ENCODE measurements at regions of chr12 and their contacts with region 1.

Region 1: DNA sequence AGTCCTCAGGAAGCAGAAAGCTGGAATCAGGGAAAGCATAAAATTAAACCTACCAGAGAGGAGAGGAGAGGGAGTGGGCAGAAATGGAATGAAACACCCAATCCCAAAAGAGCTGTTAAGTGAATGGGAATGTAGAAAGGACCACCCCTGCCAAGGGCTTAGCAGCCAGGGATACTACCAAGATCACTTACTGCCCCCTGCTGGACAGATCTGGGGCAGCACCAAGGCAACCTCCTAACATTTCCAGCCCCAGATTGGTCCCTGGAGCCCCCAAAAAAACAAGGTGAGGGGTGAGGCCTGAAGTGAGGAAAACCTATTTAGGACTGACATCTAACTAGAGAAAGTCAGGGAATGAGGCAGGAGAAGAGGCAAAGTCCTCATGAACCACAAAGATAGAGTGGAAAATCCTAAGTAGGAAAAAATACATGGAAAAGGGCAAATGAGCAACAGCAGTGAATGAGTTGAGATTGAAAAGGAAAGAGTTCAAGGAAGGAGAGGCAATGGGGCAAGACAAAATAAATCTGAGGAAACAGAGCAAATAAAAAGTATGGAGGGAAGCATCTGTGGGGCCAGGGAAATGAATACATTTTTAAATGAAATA is 11.2 kb upstream of the FKBP11 start:
- DNase-seq: peak; percentile 72 to 95
- ATAC-seq: peak; percentile 87 to 91
- H3K4me3 ChIP-seq: no peak overlapping the region
- H3K27ac ChIP-seq: no peak overlapping the region
- H3K4me1 ChIP-seq: no peaks in the 10 kb centered on the region
- CTCF ChIP-seq: peak; percentile 88
- EP300 ChIP-seq: no peak
- POLR2A ChIP-seq: no peak
- RAD21 ChIP-seq: peak; percentile 68 to 70

Region 2: DNA sequence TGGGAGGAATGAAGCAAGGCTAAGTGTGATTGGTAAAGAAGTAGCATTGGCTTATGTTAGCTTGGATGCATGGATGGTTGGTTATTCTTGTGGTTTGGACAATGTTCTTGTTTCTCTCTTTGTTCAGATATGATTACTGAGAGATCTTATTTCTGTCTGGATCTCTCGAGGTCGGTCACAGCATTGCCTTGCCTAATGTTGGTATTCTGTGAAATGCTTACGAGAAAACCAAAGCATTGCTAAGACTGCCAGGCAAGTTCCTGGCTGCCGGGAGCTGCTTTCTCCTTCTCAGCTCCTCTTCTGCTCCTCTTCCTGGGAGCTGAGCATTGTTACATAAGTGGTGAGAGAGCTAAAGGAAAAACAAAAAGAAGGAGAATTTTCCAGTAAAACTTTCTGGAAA is 63.4 kb before region 1 on chr12:
- CTCF ChIA-PET with region 1: interaction called, 311 read pairs
- POLR2A ChIA-PET with region 1: no interaction called
- DNase-seq: no peak
- ATAC-seq: no peak
- H3K4me3 ChIP-seq: no peak overlapping the region
- H3K27ac ChIP-seq: peak overlapping the region in 1 of 2 experiments; percentile 57; a peak in 2 of 6 replicates
- H3K4me1 ChIP-seq: peaks cover 24% of the 10 kb centered on the region
- CTCF ChIP-seq: no peak
- EP300 ChIP-seq: no peak
- POLR2A ChIP-seq: no peak
- RAD21 ChIP-seq: no peak

Region 3: DNA sequence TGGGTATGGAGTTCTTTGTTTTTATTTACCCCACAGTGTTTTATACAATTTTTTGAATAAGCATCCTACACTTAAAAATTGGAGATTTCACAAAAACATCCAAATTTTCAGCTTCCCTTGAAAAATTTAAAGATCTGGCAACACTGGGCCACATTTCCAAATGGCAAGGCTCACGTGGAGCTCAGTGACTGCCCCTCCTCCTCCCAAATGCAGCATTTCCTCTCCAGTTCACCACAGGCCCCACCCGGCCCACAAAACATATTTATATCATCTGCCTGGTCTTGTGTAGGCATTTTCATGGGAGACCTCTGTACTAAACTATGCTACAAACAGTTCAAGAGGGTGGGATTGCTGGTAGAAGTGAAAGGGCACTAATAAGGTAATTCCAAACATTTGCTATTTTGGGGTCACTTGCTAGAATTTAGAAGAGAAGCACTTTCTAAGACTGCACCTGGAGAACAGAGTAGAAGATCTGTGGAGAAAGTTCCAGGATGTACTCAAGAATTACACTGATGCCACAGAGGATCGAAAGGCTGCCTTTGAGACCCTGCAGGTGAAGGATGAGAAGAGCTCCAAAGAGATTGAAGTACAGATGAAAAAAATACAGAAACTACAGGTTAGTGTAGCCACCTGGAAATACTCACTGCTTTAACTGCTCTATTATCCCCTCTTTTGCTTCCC is 18.5 kb before region 1 on chr12:
- CTCF ChIA-PET with region 1: interaction called, 2,584 read pairs
- POLR2A ChIA-PET with region 1: no interaction called
- DNase-seq: no peak
- ATAC-seq: no peak
- H3K4me3 ChIP-seq: no peak overlapping the region
- H3K27ac ChIP-seq: no peak overlapping the region
- H3K4me1 ChIP-seq: no peaks in the 10 kb centered on the region
- CTCF ChIP-seq: no peak
- EP300 ChIP-seq: no peak
- POLR2A ChIP-seq: no peak
- RAD21 ChIP-seq: no peak

Region 4: GRCh38 chr12:48924617-48925303 is 11.7 kb before region 1 on chr12:
- CTCF ChIA-PET with region 1: interaction called, 2,584 read pairs
- POLR2A ChIA-PET with region 1: no interaction called
- DNase-seq: peak; percentile 59 to 62
- ATAC-seq: peak; percentile 84 to 86
- H3K4me3 ChIP-seq: peak overlapping the region; percentile 71
- H3K27ac ChIP-seq: peak overlapping the region; percentile 77 to 95
- H3K4me1 ChIP-seq: peaks cover 6% of the 10 kb centered on the region; the same call in 1 of the 3 replicates
- CTCF ChIP-seq: peak; percentile 31; the same call in 2 of the 3 replicates
- EP300 ChIP-seq: no peak
- POLR2A ChIP-seq: no peak
- RAD21 ChIP-seq: peak; percentile 35 to 38; a peak in 3 of 5 replicates

Region 5: GRCh38 chr12:49088190-49088931 is 151.9 kb after region 1 on chr12:
- CTCF ChIA-PET with region 1: no interaction called
- POLR2A ChIA-PET with region 1: no interaction called
- DNase-seq: peak; percentile 89 to 96
- ATAC-seq: peak; percentile 82 to 90
- H3K4me3 ChIP-seq: no peak overlapping the region
- H3K27ac ChIP-seq: peak overlapping the region in 1 of 2 experiments; percentile 64; a peak in 3 of 6 replicates
- H3K4me1 ChIP-seq: peaks cover 17% of the 10 kb centered on the region; the same call in 2 of the 3 replicates
- CTCF ChIP-seq: peak; percentile 92
- EP300 ChIP-seq: no peak
- POLR2A ChIP-seq: no peak
- RAD21 ChIP-seq: peak; percentile 69 to 74

Region 6: DNA sequence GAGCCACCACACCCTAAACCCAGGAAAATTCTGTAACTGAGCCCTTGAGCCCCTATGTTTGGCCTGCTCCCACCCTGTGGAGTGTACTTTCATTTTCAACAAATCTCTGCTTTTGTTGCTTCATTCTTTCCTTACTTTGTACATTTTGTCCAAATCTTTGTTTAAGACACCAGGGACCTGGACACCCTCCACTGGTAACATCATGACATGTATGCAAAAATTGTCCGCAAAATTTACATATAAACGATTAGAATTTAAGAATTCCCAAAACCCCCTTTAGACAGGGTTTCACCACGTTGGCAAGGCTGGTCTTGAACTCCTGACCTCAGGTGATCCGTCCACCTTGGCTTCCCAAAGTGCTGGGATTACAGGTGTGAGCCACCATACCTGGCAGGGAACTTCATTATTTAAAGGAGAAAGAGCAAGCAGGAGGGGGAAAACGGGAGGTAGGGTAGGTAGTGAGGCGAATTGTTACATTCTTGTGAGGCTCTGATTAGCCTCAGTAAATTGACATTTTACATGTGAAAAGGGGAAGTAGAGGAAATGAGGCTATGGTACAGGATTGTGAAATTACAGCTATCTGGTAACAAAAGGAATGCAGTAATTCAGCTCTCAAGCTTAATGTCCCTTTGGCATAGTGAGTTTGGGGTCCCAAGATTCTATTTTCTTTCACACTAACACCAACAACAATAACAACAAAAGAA is 224.8 kb after region 1 on chr12:
- CTCF ChIA-PET with region 1: no interaction called
- POLR2A ChIA-PET with region 1: no interaction called
- DNase-seq: no peak
- ATAC-seq: no peak
- H3K4me3 ChIP-seq: no peak overlapping the region
- H3K27ac ChIP-seq: no peak overlapping the region
- H3K4me1 ChIP-seq: no peaks in the 10 kb centered on the region
- CTCF ChIP-seq: no peak
- EP300 ChIP-seq: no peak
- POLR2A ChIP-seq: no peak
- RAD21 ChIP-seq: no peak

Region 7: GRCh38 chr12:49440035-49440434 is 503.6 kb after region 1 on chr12:
- CTCF ChIA-PET with region 1: no interaction called
- POLR2A ChIA-PET with region 1: no interaction called
- DNase-seq: no peak
- ATAC-seq: peak in 1 of 2 experiments; percentile 34; a peak in 3 of 6 replicates
- H3K4me3 ChIP-seq: no peak overlapping the region
- H3K27ac ChIP-seq: no peak overlapping the region
- H3K4me1 ChIP-seq: peaks cover 21% of the 10 kb centered on the region
- CTCF ChIP-seq: no peak
- EP300 ChIP-seq: no peak
- POLR2A ChIP-seq: no peak
- RAD21 ChIP-seq: no peak

Measured in A549 (cell line).